PC-9 (cell line): ENCODE measurements at regions of chr9 and their contacts with region 1.

Region 1: GRCh38 chr9:77892171-77892570 is 139.4 kb downstream of the GNAQ start:
- DNase-seq: no peak
- H3K4me3 ChIP-seq: no peak overlapping the region
- H3K27ac ChIP-seq: no peak overlapping the region
- H3K4me1 ChIP-seq: peaks cover 19% of the 10 kb centered on the region; the same call in 1 of the 2 replicates
- H3K27me3 ChIP-seq: no peaks in the 10 kb centered on the region
- CTCF ChIP-seq: no peak

Region 2: GRCh38 chr9:77793904-77794303 is 98.3 kb before region 1 on chr9:
- CTCF ChIA-PET with region 1: no interaction called
- POLR2A ChIA-PET with region 1: interaction called, 13 read pairs
- intact Hi-C with region 1: no loop called
- DNase-seq: peak; percentile 9 to 60
- H3K4me3 ChIP-seq: no peak overlapping the region
- H3K27ac ChIP-seq: no peak overlapping the region
- H3K4me1 ChIP-seq: peaks cover 29% of the 10 kb centered on the region
- H3K27me3 ChIP-seq: no peaks in the 10 kb centered on the region
- CTCF ChIP-seq: no peak

Region 3: DNA sequence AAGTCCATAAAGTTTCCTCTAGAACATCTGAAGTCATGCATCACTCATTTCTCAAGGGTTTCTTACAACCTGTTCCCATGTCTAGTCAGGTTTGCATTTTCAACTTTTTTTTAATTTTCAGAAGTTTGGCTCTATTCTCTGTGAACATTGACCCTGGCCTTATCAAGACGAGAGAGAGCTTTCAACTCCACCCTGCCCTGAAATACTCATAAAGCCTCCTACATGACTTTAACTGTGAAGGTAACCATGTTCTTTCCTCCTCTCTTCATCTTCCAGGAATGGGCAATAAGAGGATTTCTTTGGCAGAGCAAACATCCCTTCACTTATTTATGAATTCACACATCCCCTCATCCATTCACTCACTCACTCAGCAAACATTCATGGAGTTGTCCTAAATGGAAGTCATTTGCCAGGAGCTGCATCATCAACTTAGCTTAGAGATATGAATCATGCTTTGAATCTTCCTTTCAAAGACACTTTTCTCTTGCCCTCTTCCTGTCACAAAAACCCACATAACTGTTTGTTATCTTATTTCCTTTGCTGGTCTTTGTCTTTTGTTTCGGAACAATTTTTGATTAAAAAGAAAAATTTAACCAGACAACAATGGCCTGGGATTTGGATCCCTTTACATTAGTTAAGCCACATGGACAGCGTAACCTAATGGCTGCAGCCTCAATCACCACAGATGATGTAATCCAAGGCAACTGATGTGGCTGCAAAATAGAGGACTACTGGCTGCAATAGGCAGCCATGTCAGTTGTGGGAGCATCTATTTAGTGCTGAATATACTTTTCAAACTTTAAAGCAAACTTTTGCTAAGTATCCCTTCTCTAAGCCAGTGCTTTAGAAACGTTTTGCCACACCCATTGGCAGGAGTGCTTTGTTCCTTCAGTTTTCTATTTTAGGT is 182.5 kb after region 1 on chr9:
- CTCF ChIA-PET with region 1: no interaction called
- POLR2A ChIA-PET with region 1: interaction called, 11 read pairs
- intact Hi-C with region 1: no loop called
- DNase-seq: no peak
- H3K4me3 ChIP-seq: no peak overlapping the region
- H3K27ac ChIP-seq: no peak overlapping the region
- H3K4me1 ChIP-seq: no peaks in the 10 kb centered on the region
- H3K27me3 ChIP-seq: no peaks in the 10 kb centered on the region
- CTCF ChIP-seq: no peak